ENCODE measurements at regions of chr2 and their contacts with region 1.

Region 1: GRCh38 chr2:177263451-177264208 is 897 bp downstream of the NFE2L2 start:
- DNase-seq: peak; percentile 93 to 97 (median 94)
- H3K4me3 ChIP-seq: peak overlapping the region; percentile 57 to 100
- H3K4me3 Mint-ChIP-seq: peak overlapping the region; percentile 93 to 98 (median 96)
- H3K27ac ChIP-seq: peak overlapping the region; percentile 100
- H3K27ac Mint-ChIP-seq: peak overlapping the region; percentile 94 to 100 (median 99)
- H3K4me1 ChIP-seq: peaks cover 59% of the 10 kb centered on the region
- H3K4me1 Mint-ChIP-seq: peaks cover 36 to 75% (median 53%) of the 10 kb centered on the region in 4 donors
- H3K27me3 ChIP-seq: no peaks in the 10 kb centered on the region
- H3K27me3 Mint-ChIP-seq: no peaks in the 10 kb centered on the region

Region 2: DNA sequence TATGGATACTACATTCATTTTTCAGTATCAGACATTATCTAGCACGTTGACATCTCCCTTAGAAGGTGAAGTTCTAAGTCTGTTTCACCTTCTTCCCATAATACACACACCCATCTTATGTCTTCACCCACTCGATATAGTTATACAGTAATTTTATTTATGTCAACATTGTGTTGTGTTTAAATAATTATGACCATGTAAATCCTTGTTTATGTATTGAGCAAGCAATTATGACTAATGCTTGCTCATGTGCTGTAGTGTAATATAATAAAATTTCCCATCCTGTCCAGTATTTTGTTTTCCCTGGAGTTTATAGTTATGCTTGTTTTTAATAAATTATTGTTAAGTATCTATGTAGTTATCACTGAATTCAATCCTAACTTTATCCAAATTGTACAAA is 831.2 kb before region 1 on chr2:
- CTCF ChIA-PET with region 1: no interaction called
- POLR2A ChIA-PET with region 1: no interaction called
- intact Hi-C with region 1: no loop called
- DNase-seq: no peak
- H3K4me3 ChIP-seq: no peak overlapping the region
- H3K4me3 Mint-ChIP-seq: no peak overlapping the region
- H3K27ac ChIP-seq: no peak overlapping the region
- H3K27ac Mint-ChIP-seq: no peak overlapping the region
- H3K4me1 ChIP-seq: no peaks in the 10 kb centered on the region
- H3K4me1 Mint-ChIP-seq: no peaks in the 10 kb centered on the region
- H3K27me3 ChIP-seq: no peaks in the 10 kb centered on the region
- H3K27me3 Mint-ChIP-seq: peaks cover 9 to 16% of the 10 kb centered on the region in 2 donors

Region 3: DNA sequence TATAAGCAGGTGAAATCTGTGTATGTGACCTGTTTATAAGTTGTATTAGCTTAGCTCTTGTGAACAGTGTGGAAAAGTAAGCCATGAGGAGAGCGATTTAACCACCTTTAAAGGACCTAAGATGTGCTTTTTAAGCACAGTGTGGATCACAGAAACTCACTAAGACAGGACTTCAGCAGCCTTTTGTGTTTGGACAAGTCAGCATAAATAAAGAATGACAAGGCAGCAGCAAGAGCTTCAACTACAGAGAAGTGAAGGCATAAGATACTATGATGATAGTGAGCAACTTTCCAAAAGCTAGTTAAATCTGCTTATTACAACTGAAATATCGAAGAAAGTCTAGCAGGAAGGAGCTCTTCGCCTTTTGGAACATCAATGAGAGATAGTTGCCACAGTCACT is 42.1 kb before region 1 on chr2:
- CTCF ChIA-PET with region 1: interaction called, 14 read pairs
- POLR2A ChIA-PET with region 1: interaction called, 133 read pairs
- intact Hi-C with region 1: no loop called
- DNase-seq: no peak
- H3K4me3 ChIP-seq: no peak overlapping the region
- H3K4me3 Mint-ChIP-seq: no peak overlapping the region
- H3K27ac ChIP-seq: peak overlapping the region; percentile 18
- H3K27ac Mint-ChIP-seq: peak overlapping the region in 4 of 7 donors; percentile 19 to 47 (median 38)
- H3K4me1 ChIP-seq: peaks cover 38% of the 10 kb centered on the region
- H3K4me1 Mint-ChIP-seq: peaks cover 23 to 55% (median 43%) of the 10 kb centered on the region in 4 donors
- H3K27me3 ChIP-seq: no peaks in the 10 kb centered on the region
- H3K27me3 Mint-ChIP-seq: no peaks in the 10 kb centered on the region

Region 4: GRCh38 chr2:177275041-177276020 is 11.7 kb after region 1 on chr2:
- CTCF ChIA-PET with region 1: interaction called, 48 read pairs
- POLR2A ChIA-PET with region 1: interaction called, 27 read pairs
- intact Hi-C with region 1: no loop called
- DNase-seq: no peak
- H3K4me3 ChIP-seq: no peak overlapping the region
- H3K4me3 Mint-ChIP-seq: no peak overlapping the region
- H3K27ac ChIP-seq: no peak overlapping the region
- H3K27ac Mint-ChIP-seq: no peak overlapping the region
- H3K4me1 ChIP-seq: no peaks in the 10 kb centered on the region
- H3K4me1 Mint-ChIP-seq: no peaks in the 10 kb centered on the region
- H3K27me3 ChIP-seq: no peaks in the 10 kb centered on the region
- H3K27me3 Mint-ChIP-seq: no peaks in the 10 kb centered on the region

Region 5: DNA sequence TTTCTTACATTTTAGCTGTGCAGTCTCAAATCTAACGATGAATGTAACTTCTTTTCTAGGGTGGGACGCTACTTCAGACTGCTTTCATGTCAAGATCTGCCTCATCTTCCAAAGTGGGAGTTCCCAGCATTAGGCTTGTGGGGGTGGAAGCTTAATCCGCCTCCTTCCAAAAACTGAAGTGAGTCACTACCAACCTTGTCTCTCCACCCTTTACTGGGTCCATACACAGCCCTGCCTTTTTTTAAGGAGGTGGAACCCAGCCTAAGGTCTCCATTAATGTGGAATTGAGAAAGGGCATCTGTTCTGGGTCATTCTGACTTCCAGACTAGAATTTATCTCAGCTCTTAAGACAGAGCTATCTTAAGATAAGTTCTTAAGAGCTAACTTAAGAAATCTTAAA is 42.9 kb after region 1 on chr2:
- CTCF ChIA-PET with region 1: interaction called, 33 read pairs
- POLR2A ChIA-PET with region 1: interaction called, 138 read pairs
- intact Hi-C with region 1: no loop called
- DNase-seq: no peak
- H3K4me3 ChIP-seq: no peak overlapping the region
- H3K4me3 Mint-ChIP-seq: no peak overlapping the region
- H3K27ac ChIP-seq: no peak overlapping the region
- H3K27ac Mint-ChIP-seq: peak overlapping the region in 1 of 7 donors; percentile 9
- H3K4me1 ChIP-seq: peaks cover 19% of the 10 kb centered on the region
- H3K4me1 Mint-ChIP-seq: peaks cover 14 to 26% (median 18%) of the 10 kb centered on the region in 4 donors
- H3K27me3 ChIP-seq: no peaks in the 10 kb centered on the region
- H3K27me3 Mint-ChIP-seq: no peaks in the 10 kb centered on the region

Region 6: GRCh38 chr2:177392373-177393202 is 129.0 kb after region 1 on chr2 and contains the start of gene AGPS:
- CTCF ChIA-PET with region 1: interaction called, 23 read pairs
- POLR2A ChIA-PET with region 1: interaction called, 55 read pairs
- intact Hi-C with region 1: loop called (anchors 5 kb)
- DNase-seq: peak; percentile 66 to 76 (median 72)
- H3K4me3 ChIP-seq: peak within 1 kb of the TSS; percentile 78
- H3K4me3 Mint-ChIP-seq: peak within 1 kb of the TSS; percentile 92 to 98 (median 94)
- H3K27ac ChIP-seq: peak within 1 kb of the TSS; percentile 56
- H3K27ac Mint-ChIP-seq: peak within 1 kb of the TSS; percentile 79 to 94 (median 92)
- H3K4me1 ChIP-seq: peaks cover 47% of the 10 kb centered on the region
- H3K4me1 Mint-ChIP-seq: peaks cover 47 to 63% (median 53%) of the 10 kb centered on the region in 4 donors
- H3K27me3 ChIP-seq: no peaks in the 10 kb centered on the region
- H3K27me3 Mint-ChIP-seq: no peaks in the 10 kb centered on the region
- total RNA-seq, gene AGPS: 28.3 to 29.7 TPM

Region 7: DNA sequence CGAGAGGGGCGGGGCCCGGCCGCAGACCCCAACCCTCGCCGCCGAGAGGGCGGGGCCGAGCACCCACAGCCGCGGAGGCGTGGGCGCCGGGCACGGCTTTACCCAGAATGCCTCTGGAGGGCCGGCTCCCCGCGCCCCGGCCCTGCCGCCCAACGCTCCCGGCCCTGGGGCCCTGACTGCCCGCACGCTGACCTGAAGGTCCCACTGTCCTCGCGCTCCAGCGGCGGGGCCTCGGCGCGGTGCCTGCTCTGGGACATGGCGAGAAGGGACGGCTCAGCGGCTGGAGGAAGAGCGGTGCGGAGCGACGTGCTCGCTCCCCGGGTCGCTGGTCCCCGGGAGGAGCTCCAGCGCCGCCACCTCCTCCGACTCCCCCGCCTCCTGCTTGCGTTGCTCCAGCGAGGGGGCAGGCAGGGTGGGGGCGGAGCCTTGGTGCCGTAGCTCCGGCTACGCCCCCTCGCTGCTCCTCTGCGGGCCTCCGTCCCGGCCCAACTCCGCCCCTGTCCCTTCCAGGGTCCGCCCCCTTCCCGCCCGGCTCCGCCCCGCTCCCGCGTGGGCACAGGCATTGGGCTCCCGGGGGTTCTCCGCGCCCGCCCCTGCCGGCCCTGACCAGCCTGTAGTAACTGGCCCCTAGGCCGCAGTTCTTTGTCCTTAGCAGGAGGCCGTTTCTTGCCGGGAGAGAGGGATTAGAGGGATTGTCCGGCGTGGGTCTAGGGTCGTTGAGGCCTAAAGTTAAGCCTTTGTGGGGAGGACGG is 1187.3 kb after region 1 on chr2 and contains the starts of genes PJVK and PRKRA:
- CTCF ChIA-PET with region 1: no interaction called
- POLR2A ChIA-PET with region 1: interaction called, 17 read pairs
- intact Hi-C with region 1: no loop called
- DNase-seq: peak; percentile 93 to 95 (median 94)
- H3K4me3 ChIP-seq: peak within 1 kb of the TSS; percentile 40 to 76
- H3K4me3 Mint-ChIP-seq: peak within 1 kb of the TSS; percentile 87 to 93 (median 90)
- H3K27ac ChIP-seq: peak within 1 kb of the TSS; percentile 97
- H3K27ac Mint-ChIP-seq: peak within 1 kb of the TSS; percentile 94 to 97 (median 97)
- H3K4me1 ChIP-seq: peaks cover 32% of the 10 kb centered on the region
- H3K4me1 Mint-ChIP-seq: peaks cover 21 to 34% (median 27%) of the 10 kb centered on the region in 4 donors
- H3K27me3 ChIP-seq: no peaks in the 10 kb centered on the region
- H3K27me3 Mint-ChIP-seq: peaks cover 2 to 3% of the 10 kb centered on the region in 2 donors
- total RNA-seq, gene PJVK: 3.6 to 4.1 TPM
- total RNA-seq, gene PRKRA: 51.0 to 52.4 TPM